ENCODE measurements at regions of chr17 and their contacts with region 1.

Region 1: GRCh38 chr17:49707608-49708514 is at the start of gene SLC35B1:
- DNase-seq: peak; percentile 98
- H3K4me3 ChIP-seq: peak within 1 kb of the TSS; percentile 82 to 94 (median 87)
- H3K27ac ChIP-seq: peak within 1 kb of the TSS; percentile 89
- H3K4me1 ChIP-seq: peaks cover 16% of the 10 kb centered on the region
- H3K27me3 ChIP-seq: no peaks in the 10 kb centered on the region
- CTCF ChIP-seq: peak; percentile 92 to 96
- total RNA-seq, gene SLC35B1: 35.5 to 55.9 TPM

Region 2: DNA sequence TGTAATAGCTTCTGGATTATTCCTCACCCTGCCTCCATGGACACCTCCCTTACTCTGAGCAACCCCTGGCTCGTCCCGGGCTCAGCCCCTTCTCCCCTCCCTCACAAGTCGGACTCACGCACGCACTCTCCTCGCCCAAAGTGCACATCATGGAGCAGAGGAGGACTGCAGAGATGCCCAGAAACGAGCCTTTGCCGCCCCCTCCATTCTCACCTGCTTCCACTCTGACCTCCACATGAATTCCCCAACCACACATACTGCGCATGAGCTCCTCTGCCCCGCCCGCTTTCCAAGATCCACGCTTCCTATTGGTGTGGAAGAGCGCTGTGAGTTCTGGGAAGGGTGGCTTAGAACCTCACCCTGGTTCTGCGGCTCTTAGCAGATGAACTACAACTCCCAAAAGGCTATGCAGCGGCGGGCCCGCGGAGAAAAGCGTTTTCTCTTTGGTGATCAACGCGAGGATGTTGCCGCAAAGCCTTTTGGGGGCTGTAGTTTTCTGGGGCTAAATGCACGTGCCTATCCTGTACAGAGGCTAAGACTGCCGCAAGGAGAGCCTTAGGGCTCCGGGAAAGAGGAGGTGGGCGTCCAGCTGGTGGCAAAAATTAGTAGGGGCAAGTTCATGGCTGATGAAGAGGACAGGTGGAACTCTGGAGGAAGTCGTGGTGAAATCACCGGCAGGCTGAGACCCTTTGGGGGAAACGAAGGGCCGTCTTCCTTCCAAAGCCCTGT is 293.1 kb before region 1 on chr17 and contains the start of gene PHB1:
- CTCF ChIA-PET with region 1: no interaction called
- dilution Hi-C with region 1: no loop called
- in situ Hi-C with region 1: loop called in 1 of 2 experiments (anchors 25 kb)
- intact Hi-C with region 1: no loop called
- DNase-seq: peak; percentile 97
- H3K4me3 ChIP-seq: peak within 1 kb of the TSS; percentile 82 to 86 (median 83)
- H3K27ac ChIP-seq: peak within 1 kb of the TSS; percentile 42
- H3K4me1 ChIP-seq: peaks cover 6% of the 10 kb centered on the region
- H3K27me3 ChIP-seq: no peaks in the 10 kb centered on the region
- CTCF ChIP-seq: no peak
- total RNA-seq, gene PHB1: 115 to 193 TPM

Region 3: GRCh38 chr17:49677933-49678847 is 29.7 kb before region 1 on chr17 and contains the start of gene SPOP:
- CTCF ChIA-PET with region 1: no interaction called
- dilution Hi-C with region 1: no loop called
- in situ Hi-C with region 1: no loop called
- intact Hi-C with region 1: no loop called
- DNase-seq: peak; percentile 99
- H3K4me3 ChIP-seq: peak within 1 kb of the TSS; percentile 71 to 78 (median 71)
- H3K27ac ChIP-seq: peak within 1 kb of the TSS; percentile 83
- H3K4me1 ChIP-seq: peaks cover 12% of the 10 kb centered on the region
- H3K27me3 ChIP-seq: no peaks in the 10 kb centered on the region
- CTCF ChIP-seq: no peak
- total RNA-seq, gene SPOP: 36.0 to 49.8 TPM

Region 4: GRCh38 chr17:49763735-49764558 is 56.1 kb after region 1 on chr17 and contains the start of gene FAM117A:
- CTCF ChIA-PET with region 1: no interaction called
- dilution Hi-C with region 1: no loop called
- in situ Hi-C with region 1: no loop called
- intact Hi-C with region 1: loop called (anchors 1 kb)
- DNase-seq: peak; percentile 99
- H3K4me3 ChIP-seq: peak within 1 kb of the TSS; percentile 58 to 73 (median 66)
- H3K27ac ChIP-seq: peak within 1 kb of the TSS; percentile 23
- H3K4me1 ChIP-seq: peaks cover 23% of the 10 kb centered on the region
- H3K27me3 ChIP-seq: no peaks in the 10 kb centered on the region
- CTCF ChIP-seq: no peak
- total RNA-seq, gene FAM117A: 2.8 to 5.9 TPM

Region 5: GRCh38 chr17:49788478-49789242 is 80.8 kb after region 1 on chr17 and contains the start of gene KAT7:
- CTCF ChIA-PET with region 1: no interaction called
- dilution Hi-C with region 1: loop called (anchors 5 kb)
- in situ Hi-C with region 1: no loop called
- intact Hi-C with region 1: loop called (anchors 1 kb)
- DNase-seq: peak; percentile 99
- H3K4me3 ChIP-seq: peak within 1 kb of the TSS; percentile 92 to 100 (median 99)
- H3K27ac ChIP-seq: peak within 1 kb of the TSS; percentile 96
- H3K4me1 ChIP-seq: peaks cover 11% of the 10 kb centered on the region
- H3K27me3 ChIP-seq: no peaks in the 10 kb centered on the region
- CTCF ChIP-seq: no peak
- total RNA-seq, gene KAT7: 22.5 to 43.2 TPM

Region 6: GRCh38 chr17:49851387-49852291 is 143.8 kb after region 1 on chr17:
- CTCF ChIA-PET with region 1: no interaction called
- dilution Hi-C with region 1: no loop called
- in situ Hi-C with region 1: loop called in 1 of 2 experiments (anchors 25 kb)
- intact Hi-C with region 1: loop called (anchors 5 kb)
- DNase-seq: no peak
- H3K4me3 ChIP-seq: peak overlapping the region; percentile 29 to 44 (median 41)
- H3K27ac ChIP-seq: no peak overlapping the region
- H3K4me1 ChIP-seq: peaks cover 9% of the 10 kb centered on the region
- H3K27me3 ChIP-seq: peaks cover 6% of the 10 kb centered on the region
- CTCF ChIP-seq: peak; percentile 23 to 36